Mammary epithelial cell (primary cell): ENCODE measurements at regions of chr4 and their contacts with region 1.

Region 1: GRCh38 chr4:35900286-35901243 is 343.7 kb downstream of the ARAP2 start:
- DNase-seq: no peak
- H3K4me3 ChIP-seq: no peak overlapping the region
- H3K27ac ChIP-seq: no peak overlapping the region
- H3K4me1 ChIP-seq: no peaks in the 10 kb centered on the region
- H3K27me3 ChIP-seq: no peaks in the 10 kb centered on the region
- CTCF ChIP-seq: no peak

Region 2: GRCh38 chr4:34323549-34324325 is 1576.8 kb before region 1 on chr4:
- CTCF ChIA-PET with region 1: no interaction called
- dilution Hi-C with region 1: no loop called
- in situ Hi-C with region 1: no loop called
- intact Hi-C with region 1: loop called (anchors 10 kb)
- DNase-seq: no peak
- H3K4me3 ChIP-seq: no peak overlapping the region
- H3K27ac ChIP-seq: no peak overlapping the region
- H3K4me1 ChIP-seq: no peaks in the 10 kb centered on the region
- H3K27me3 ChIP-seq: no peaks in the 10 kb centered on the region
- CTCF ChIP-seq: no peak

Region 3: GRCh38 chr4:35604724-35605123 is 295.8 kb before region 1 on chr4:
- CTCF ChIA-PET with region 1: no interaction called
- dilution Hi-C with region 1: no loop called
- in situ Hi-C with region 1: no loop called
- intact Hi-C with region 1: no loop called
- DNase-seq: no peak
- H3K4me3 ChIP-seq: no peak overlapping the region
- H3K27ac ChIP-seq: no peak overlapping the region
- H3K4me1 ChIP-seq: no peaks in the 10 kb centered on the region
- H3K27me3 ChIP-seq: no peaks in the 10 kb centered on the region
- CTCF ChIP-seq: no peak